ENCODE measurements at regions of chrX and their contacts with region 1.

Region 1: GRCh38 chrX:51614353-51615012 is 4.2 kb downstream of the CENPVL3 start:
- H3K4me3 ChIP-seq: no peak overlapping the region
- H3K27ac ChIP-seq: no peak overlapping the region
- H3K4me1 ChIP-seq: no peaks in the 10 kb centered on the region
- CTCF ChIP-seq: no peak

Region 2: GRCh38 chrX:51461053-51462044 is 153.1 kb before region 1 on chrX:
- CTCF ChIA-PET with region 1: no interaction called
- POLR2A ChIA-PET with region 1: no interaction called
- H3K4me3 ChIP-seq: no peak overlapping the region
- H3K27ac ChIP-seq: no peak overlapping the region
- H3K4me1 ChIP-seq: no peaks in the 10 kb centered on the region
- CTCF ChIP-seq: no peak

Region 3: DNA sequence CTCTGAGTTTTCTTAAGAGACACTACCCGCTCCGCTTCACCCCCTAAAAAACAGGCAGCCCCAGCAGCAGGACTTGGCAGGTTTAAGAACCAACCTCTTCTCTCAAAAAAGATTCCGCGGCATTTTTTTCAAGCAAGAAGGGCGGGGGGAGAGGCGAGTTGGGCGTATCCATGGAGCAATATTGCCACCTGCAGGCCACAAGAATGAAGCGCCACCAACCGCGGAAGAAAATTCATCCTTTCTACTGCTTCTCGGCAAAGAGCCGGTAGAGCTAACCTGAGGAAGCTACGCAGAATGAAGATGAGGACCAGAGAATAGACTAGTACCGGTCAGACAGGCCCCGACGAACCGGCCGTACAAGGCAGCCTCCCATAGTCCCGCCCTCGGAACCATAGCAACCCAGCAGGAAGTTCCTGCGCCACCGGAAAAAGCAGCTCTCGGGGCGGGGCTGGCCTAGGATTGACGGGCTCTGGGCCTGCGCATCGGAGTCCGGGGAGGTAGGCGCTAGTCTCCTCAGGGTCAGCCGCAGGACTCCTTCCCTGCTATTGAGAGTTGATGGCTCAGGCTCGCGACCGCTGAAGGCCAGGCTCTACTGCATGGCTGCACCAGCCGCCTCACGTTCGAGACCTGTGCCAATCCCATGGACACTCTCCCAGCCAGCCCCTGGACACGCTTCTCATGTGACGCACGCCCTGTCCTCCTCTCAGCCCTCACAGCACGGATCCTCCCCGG is 647.1 kb after region 1 on chrX:
- CTCF ChIA-PET with region 1: no interaction called
- POLR2A ChIA-PET with region 1: interaction called, 13 read pairs
- H3K4me3 ChIP-seq: peak overlapping the region; percentile 78
- H3K27ac ChIP-seq: peak overlapping the region; percentile 70
- H3K4me1 ChIP-seq: peaks cover 3% of the 10 kb centered on the region; the same call in 1 of the 2 replicates
- CTCF ChIP-seq: peak; percentile 92